ENCODE measurements at regions of chr5 and their contacts with region 1.

Region 1: DNA sequence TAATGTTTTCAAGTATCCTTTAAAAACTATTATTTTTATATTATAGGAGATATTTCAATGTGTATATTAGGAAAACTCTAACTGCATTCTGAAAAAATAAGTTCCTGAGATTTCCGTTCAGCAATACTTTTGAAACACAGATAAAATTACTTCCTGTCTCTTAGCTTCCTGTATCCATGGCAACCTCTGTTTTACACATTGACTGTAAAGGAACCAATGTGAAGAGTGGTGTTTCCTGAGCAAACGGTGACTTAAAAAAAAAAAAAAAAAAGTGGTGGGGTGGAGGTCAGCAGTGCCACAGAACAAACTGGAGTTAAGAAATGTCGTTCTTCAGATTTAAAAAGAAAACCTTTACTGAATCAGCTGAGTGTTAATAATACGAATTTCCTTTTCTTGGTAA is at the start of gene LRRC70:
- DNase-seq: peak in 5 of 14 experiments; percentile 11 to 92 (median 86)
- ATAC-seq: peak; percentile 96
- H3K4me3 ChIP-seq: no peak within 1 kb of the TSS
- H3K4me3 Mint-ChIP-seq: peak within 1 kb of the TSS; percentile 85
- H3K27ac ChIP-seq: peak within 1 kb of the TSS; percentile 0 to 35
- H3K27ac Mint-ChIP-seq: peak within 1 kb of the TSS; percentile 79
- H3K4me1 ChIP-seq: no peaks in the 10 kb centered on the region
- H3K4me1 Mint-ChIP-seq: peaks cover 50% of the 10 kb centered on the region
- H3K27me3 ChIP-seq: no peaks in the 10 kb centered on the region
- H3K27me3 Mint-ChIP-seq: no peaks in the 10 kb centered on the region
- CTCF ChIP-seq: no peak
- total RNA-seq, gene LRRC70: 6.1 to 7.3 TPM

Region 2: DNA sequence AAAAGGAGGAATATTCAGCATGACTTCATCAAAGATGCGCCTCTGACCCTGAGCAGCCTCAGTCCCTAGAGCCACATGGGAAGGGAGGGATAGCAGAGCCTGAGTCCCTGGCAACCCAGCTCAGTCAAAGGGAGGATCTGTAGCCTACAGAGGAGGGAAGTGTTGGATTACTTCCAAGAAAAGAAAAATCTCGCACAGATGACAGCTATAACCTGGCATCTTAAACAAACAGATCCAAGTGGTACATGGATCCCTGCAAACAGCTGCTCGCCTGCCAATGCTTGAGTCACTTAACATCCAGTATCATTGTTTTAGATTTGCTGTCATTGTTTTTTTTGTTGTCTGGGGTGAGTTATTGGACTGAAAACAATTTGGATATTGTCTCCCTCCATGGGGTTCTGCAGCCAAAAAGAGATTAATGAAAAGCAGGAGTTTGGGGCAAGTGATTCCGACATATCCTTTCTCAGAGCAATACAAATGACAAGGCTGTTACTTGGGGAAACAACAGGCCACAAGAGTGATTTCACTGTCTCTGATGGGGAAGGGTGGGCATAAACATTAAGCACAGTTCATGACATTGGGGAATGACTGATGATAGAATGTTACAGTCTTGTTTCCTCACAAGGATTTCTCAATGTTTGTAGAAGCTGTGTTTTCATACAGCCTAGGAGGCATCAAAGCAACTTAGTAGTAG is 426.0 kb before region 1 on chr5:
- CTCF ChIA-PET with region 1: no interaction called
- POLR2A ChIA-PET with region 1: no interaction called
- intact Hi-C with region 1: no loop called
- DNase-seq: no peak
- ATAC-seq: no peak
- H3K4me3 ChIP-seq: no peak overlapping the region
- H3K4me3 Mint-ChIP-seq: no peak overlapping the region
- H3K27ac ChIP-seq: no peak overlapping the region
- H3K27ac Mint-ChIP-seq: no peak overlapping the region
- H3K4me1 ChIP-seq: no peaks in the 10 kb centered on the region
- H3K4me1 Mint-ChIP-seq: no peaks in the 10 kb centered on the region
- H3K27me3 ChIP-seq: no peaks in the 10 kb centered on the region
- H3K27me3 Mint-ChIP-seq: peaks cover 14% of the 10 kb centered on the region
- CTCF ChIP-seq: no peak

Region 3: DNA sequence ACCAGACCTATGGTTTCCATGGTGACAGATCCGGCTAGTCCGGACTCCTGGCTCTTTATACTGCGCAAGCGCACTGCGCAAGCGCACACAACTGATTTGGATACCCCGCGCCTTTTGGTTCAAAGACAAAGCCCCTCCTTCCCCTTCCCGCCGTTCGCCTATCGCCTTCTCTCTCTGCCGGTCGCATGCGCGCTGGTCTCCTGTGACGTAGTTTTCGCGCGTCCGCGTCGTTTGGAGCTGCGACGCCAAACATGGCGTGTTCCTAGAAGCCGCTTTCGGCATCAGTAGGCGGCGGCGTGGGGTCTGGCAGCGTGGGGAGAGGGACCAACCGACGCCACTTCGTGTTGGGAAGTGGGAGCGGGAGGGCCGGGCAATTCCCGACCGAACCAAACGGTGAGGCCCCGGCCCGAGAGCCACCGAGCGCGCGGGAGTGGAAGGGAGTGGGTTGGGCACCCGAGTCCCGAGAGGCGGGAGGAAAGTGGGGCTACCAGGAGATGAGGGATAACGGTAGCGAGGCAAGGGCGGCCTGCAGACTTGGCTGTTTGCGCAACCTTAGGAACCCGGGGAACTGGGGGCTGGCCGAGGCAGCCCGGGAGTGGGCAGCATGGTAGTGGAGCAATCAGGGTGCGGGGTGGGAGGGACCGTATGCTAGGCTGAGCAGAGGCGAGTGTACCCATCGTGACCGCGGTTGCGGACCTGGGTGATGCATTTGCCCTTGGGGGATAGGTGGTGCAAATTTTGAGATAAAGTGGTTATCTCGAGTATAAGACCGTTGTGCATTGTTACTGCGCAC is 165.8 kb before region 1 on chr5 and contains the start of gene IPO11:
- CTCF ChIA-PET with region 1: no interaction called
- POLR2A ChIA-PET with region 1: no interaction called
- intact Hi-C with region 1: loop called in 1 of 2 experiments (anchors 5 kb)
- DNase-seq: peak; percentile 97 to 100 (median 98)
- ATAC-seq: peak; percentile 94
- H3K4me3 ChIP-seq: peak within 1 kb of the TSS; percentile 86
- H3K4me3 Mint-ChIP-seq: peak within 1 kb of the TSS; percentile 88
- H3K27ac ChIP-seq: peak within 1 kb of the TSS; percentile 69 to 79
- H3K27ac Mint-ChIP-seq: peak within 1 kb of the TSS; percentile 78
- H3K4me1 ChIP-seq: peaks cover 14% of the 10 kb centered on the region
- H3K4me1 Mint-ChIP-seq: peaks cover 30% of the 10 kb centered on the region
- H3K27me3 ChIP-seq: no peaks in the 10 kb centered on the region
- H3K27me3 Mint-ChIP-seq: no peaks in the 10 kb centered on the region
- CTCF ChIP-seq: no peak
- total RNA-seq, gene IPO11: 15.1 to 16.1 TPM

Region 4: GRCh38 chr5:62475072-62475471 is 103.5 kb before region 1 on chr5:
- CTCF ChIA-PET with region 1: no interaction called
- POLR2A ChIA-PET with region 1: no interaction called
- intact Hi-C with region 1: no loop called
- DNase-seq: no peak
- ATAC-seq: no peak
- H3K4me3 ChIP-seq: no peak overlapping the region
- H3K4me3 Mint-ChIP-seq: no peak overlapping the region
- H3K27ac ChIP-seq: no peak overlapping the region
- H3K27ac Mint-ChIP-seq: no peak overlapping the region
- H3K4me1 ChIP-seq: no peaks in the 10 kb centered on the region
- H3K4me1 Mint-ChIP-seq: no peaks in the 10 kb centered on the region
- H3K27me3 ChIP-seq: no peaks in the 10 kb centered on the region
- H3K27me3 Mint-ChIP-seq: no peaks in the 10 kb centered on the region
- CTCF ChIP-seq: no peak

Region 5: DNA sequence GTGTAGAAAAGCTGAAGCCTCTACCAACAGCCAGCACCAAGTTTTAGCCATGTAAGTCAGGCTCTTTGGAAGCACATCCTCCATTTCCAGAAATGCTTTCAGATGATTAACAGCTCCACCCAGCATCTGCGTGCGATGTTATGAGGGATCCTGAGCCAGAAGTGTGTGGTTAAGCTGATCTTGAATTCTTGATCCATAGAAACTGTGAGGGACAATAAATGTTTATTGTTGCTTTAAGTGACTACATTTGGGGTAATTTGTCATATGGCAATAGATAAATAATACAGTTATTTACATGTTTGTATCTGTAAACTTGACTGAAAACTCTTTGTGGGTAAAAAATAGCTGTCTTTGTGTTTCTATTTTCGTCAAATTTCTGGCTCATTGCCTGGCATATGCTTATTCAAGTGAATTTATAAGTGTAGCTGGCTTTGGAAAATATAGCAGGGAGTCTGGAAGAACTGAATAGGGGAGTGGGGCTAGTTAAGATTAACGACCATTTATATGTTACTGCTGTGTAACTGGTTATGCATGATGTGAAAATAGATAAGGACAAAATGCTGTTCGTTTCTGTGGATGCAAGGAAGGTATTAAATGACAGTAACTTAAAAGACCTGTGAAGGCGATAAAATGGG is 234.2 kb after region 1 on chr5:
- CTCF ChIA-PET with region 1: no interaction called
- POLR2A ChIA-PET with region 1: no interaction called
- intact Hi-C with region 1: no loop called
- DNase-seq: no peak
- ATAC-seq: no peak
- H3K4me3 ChIP-seq: no peak overlapping the region
- H3K4me3 Mint-ChIP-seq: no peak overlapping the region
- H3K27ac ChIP-seq: no peak overlapping the region
- H3K27ac Mint-ChIP-seq: no peak overlapping the region
- H3K4me1 ChIP-seq: no peaks in the 10 kb centered on the region
- H3K4me1 Mint-ChIP-seq: no peaks in the 10 kb centered on the region
- H3K27me3 ChIP-seq: no peaks in the 10 kb centered on the region
- H3K27me3 Mint-ChIP-seq: peaks cover 49% of the 10 kb centered on the region
- CTCF ChIP-seq: no peak